ENCODE measurements at regions of chr2 and their contacts with region 1.

Region 1: DNA sequence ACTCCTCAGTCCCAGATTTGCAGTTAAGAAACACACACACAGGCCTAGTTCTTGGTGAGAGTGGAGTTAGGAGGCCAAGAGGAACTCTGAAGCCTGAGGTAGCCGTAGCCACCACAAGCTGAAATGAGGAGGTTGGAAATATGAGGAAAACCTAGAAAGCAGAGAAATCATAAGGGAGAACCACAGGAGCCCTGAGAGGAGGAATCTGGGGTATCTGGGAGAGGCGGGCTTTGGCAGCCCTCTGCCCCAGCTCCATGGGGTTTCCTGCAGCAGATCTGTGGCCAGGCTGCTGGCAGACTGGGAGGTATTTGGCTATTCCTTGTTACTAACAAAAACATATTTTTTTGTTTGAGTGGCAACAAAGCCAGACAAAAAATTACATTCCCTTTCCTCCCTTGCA is 11.0 kb downstream of the SOX11 start:
- DNase-seq: no peak
- H3K4me3 ChIP-seq: no peak overlapping the region
- H3K27ac ChIP-seq: no peak overlapping the region
- H3K4me1 ChIP-seq: no peaks in the 10 kb centered on the region
- H3K27me3 ChIP-seq: peaks cover 0 to 33% of the 10 kb centered on the region in 2 donors
- CTCF ChIP-seq: no peak
- POLR2A ChIP-seq: no peak

Region 2: DNA sequence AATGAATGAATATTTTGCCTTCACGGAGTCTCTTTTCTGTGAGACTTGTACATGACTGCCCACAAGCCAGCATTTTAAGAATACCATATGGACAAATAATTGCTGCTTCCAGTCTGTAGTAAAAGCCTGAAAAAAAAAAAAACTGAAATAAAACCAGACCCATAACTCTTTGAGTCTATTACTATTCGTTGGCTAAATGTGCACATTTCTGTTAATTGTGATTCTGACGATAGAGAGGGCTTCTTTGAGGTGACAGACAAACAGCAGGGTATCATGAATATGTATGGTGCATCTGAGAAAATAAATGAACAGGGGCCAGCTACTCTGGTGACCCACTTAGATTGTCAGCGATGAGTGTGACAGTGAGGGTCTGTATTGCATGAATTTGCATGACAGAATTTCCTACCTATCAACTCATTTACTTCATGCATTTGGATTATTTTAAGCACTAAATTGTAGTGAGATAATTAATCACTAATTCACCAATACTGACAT is 438.8 kb before region 1 on chr2:
- intact Hi-C with region 1: no loop called
- DNase-seq: no peak
- H3K4me3 ChIP-seq: no peak overlapping the region
- H3K27ac ChIP-seq: no peak overlapping the region
- H3K4me1 ChIP-seq: no peaks in the 10 kb centered on the region
- H3K27me3 ChIP-seq: no peaks in the 10 kb centered on the region
- CTCF ChIP-seq: no peak
- POLR2A ChIP-seq: no peak

Region 3: DNA sequence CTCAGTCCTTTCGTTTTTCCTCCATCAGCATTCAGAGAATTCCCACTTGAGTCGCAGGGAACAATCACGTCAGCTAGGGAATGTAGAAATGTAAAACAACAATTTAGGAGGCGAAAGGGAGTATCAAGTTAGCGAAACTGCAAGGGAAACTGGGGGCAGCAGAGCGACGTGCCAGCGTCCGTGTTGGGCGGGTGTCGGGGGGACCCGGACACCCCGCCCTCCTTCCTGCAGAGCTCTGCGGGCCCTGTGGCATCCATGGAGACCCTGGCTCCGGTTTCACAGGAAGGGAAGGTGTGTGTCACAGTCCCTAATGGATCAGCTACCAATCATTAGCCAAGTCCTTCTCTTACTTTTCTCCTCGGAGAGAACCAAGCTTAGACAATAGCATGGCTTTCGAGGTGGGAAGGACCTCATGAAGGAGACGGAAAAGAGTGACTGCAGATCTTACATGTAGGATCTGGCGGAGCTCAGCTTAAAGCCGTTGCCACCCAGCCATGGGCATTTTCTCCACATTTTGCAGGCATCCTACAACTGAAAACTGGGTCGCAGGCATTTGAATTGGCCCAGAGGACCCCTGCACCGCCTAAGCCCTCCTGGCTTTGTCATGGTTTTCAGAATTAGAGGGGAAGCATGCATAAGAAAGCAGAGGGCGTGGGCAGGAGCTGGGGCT is 22.8 kb after region 1 on chr2:
- intact Hi-C with region 1: loop called (anchors 1 kb)
- DNase-seq: no peak
- H3K4me3 ChIP-seq: peak overlapping the region in 2 of 3 donors; percentile 30 to 41
- H3K27ac ChIP-seq: no peak overlapping the region
- H3K4me1 ChIP-seq: no peaks in the 10 kb centered on the region
- H3K27me3 ChIP-seq: no peaks in the 10 kb centered on the region
- CTCF ChIP-seq: no peak
- POLR2A ChIP-seq: no peak